ENCODE measurements at regions of chr20 and their contacts with region 1.

Region 1: DNA sequence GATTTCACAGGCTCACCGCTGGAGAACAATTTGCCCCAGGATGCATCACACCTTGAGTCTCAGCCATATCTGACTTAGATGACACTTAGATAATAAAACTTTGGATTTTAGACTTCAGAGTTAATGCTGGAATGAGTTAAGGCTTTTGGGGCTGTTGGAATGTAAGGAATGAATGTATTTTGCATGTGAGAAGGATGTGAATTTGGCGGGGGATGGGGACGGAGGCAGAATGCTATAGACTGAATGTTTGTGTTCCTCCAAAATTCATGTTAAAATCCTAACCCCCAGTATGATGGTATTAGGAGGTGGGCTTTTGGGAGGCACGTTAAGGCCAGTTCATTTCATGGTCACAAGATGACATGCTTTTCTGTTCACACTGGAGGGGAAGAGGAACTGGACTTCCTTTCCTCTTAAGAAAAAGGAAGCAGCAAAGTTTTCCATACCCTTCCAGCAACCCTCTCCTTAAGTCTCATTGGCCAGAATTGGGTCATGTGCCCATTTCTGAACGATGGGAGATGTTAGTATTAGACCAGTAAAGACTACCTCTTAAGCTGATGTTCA is 5.8 kb upstream of the SRXN1 start:
- DNase-seq: no peak
- H3K4me3 ChIP-seq: no peak overlapping the region
- H3K27ac ChIP-seq: no peak overlapping the region
- H3K4me1 ChIP-seq: peaks cover 0 to 16% (median 5%) of the 10 kb centered on the region in 4 donors
- H3K27me3 ChIP-seq: peaks cover 16 to 56% (median 28%) of the 10 kb centered on the region in 3 donors
- CTCF ChIP-seq: no peak
- EP300 ChIP-seq: no peak
- POLR2A ChIP-seq: no peak

Region 2: DNA sequence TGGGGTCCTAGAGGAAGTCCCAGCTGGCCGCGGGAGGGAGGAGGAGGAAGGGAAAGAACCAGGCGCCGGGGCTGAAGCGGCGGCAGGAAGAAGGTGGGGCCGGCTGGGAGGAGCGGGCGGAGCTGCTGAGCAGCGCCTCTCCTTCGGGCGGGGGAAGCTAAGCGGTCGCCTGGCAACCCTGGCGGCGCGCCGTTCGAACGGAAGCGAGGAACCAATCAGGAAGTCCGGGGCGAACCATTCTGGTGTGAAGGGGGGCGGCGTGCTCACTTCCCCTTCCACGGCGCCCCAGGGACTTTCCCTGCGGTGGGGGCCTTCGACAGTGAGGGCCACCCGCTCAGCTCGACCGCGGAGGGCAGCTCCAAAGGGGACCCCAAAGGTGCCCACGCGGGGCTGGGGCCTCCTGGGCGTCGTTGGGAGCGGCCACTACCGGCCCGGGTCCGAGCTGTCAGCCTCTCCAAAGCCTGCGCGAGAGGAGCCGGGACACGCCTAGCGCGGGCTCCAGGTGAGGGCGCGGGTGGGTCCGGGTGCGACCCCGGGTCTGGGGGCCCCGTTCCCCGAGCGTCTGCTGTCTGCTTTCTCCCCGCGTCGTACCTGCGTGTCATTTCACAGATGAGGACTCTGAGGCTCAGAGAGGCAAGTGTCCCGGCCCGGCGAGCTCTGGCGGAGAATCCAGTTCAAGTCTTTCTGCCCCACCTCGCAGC is 174.8 kb after region 1 on chr20 and contains the start of gene FAM110A:
- intact Hi-C with region 1: loop called (anchors 5 kb)
- DNase-seq: peak; percentile 98
- H3K4me3 ChIP-seq: peak within 1 kb of the TSS; percentile 57 to 91 (median 70)
- H3K27ac ChIP-seq: peak within 1 kb of the TSS; percentile 59 to 79 (median 71)
- H3K4me1 ChIP-seq: peaks cover 0 to 19% (median 11%) of the 10 kb centered on the region in 4 donors
- H3K27me3 ChIP-seq: no peaks in the 10 kb centered on the region
- CTCF ChIP-seq: no peak
- EP300 ChIP-seq: no peak
- POLR2A ChIP-seq: no peak
- total RNA-seq, gene FAM110A: 0.55 to 2.5 (median 1.6) TPM

Measured in sigmoid colon (tissue), 7 donors.